MCF 10A (cell line): ENCODE measurements at regions of chr12 and their contacts with region 1.

Region 1: GRCh38 chr12:133181238-133181959 is at the start of gene ZNF268:
- DNase-seq: peak; percentile 92
- H3K4me3 Mint-ChIP-seq: peak within 1 kb of the TSS; percentile 90
- H3K27ac Mint-ChIP-seq: peak within 1 kb of the TSS; percentile 82
- H3K4me1 Mint-ChIP-seq: no peaks in the 10 kb centered on the region
- H3K27me3 Mint-ChIP-seq: no peaks in the 10 kb centered on the region
- CTCF ChIP-seq: peak; percentile 85
- total RNA-seq, gene ZNF268: 23.4 and 26.6 TPM in 2 replicates

Region 2: DNA sequence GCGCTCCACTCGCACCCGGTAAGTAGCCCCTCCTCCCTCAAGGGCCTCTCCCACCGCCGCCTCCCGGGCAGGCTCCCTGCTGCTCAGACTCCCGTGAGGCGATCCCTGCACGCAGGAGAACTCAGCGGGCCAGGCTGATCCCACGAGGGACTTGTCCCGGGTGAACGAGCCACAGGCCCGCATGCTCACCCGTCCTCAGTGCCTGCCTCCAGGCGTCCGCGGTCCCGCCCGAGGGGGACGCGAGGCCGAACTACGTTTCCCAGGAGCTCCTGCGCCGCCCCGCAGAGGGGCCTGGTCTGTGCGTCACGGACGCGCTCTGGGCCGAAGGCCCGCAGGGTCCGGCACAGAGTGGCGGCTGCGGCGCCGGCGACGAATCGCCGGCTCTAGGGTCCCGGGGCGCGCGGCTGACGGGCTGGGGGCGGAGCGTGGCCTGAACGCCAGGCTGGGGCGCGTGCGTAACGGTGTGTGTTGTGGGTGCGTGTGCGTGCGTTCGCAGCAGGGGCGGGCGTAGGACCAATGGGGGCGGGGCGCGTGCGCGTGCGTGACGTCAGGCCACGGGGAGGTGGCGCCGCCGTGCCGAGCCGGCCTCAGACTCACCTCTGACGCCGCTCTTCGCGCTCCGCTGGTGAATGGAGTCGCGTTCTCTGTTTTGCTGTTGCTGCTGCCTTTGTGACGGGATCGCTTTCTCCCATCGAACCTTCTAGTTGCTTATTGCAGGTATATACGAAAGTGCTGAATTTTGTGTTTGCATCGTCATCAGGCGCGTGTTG is 51.2 kb before region 1 on chr12 and contains the starts of genes ZNF10 and ZNF891:
- CTCF ChIA-PET with region 1: interaction called, 5 read pairs
- POLR2A ChIA-PET with region 1: interaction called, 33 read pairs
- intact Hi-C with region 1: loop called (anchors 2 kb)
- DNase-seq: peak; percentile 94
- H3K4me3 Mint-ChIP-seq: peak within 1 kb of the TSS; percentile 98
- H3K27ac Mint-ChIP-seq: peak within 1 kb of the TSS; percentile 98
- H3K4me1 Mint-ChIP-seq: peaks cover 6% of the 10 kb centered on the region
- H3K27me3 Mint-ChIP-seq: no peaks in the 10 kb centered on the region
- CTCF ChIP-seq: no peak
- total RNA-seq, gene ZNF10: 6.6 and 7.2 TPM in 2 replicates
- total RNA-seq, gene ZNF891: 1.6 and 1.9 TPM in 2 replicates

Region 3: GRCh38 chr12:133165776-133166175 is 15.6 kb before region 1 on chr12:
- CTCF ChIA-PET with region 1: interaction called, 4 read pairs
- POLR2A ChIA-PET with region 1: interaction called, 11 read pairs
- intact Hi-C with region 1: no loop called
- DNase-seq: peak; percentile 8
- H3K4me3 Mint-ChIP-seq: no peak overlapping the region
- H3K27ac Mint-ChIP-seq: no peak overlapping the region
- H3K4me1 Mint-ChIP-seq: no peaks in the 10 kb centered on the region
- H3K27me3 Mint-ChIP-seq: no peaks in the 10 kb centered on the region
- CTCF ChIP-seq: no peak